Naive thymus-derived CD4-positive, alpha-beta T cell (primary cell): ENCODE measurements at regions of chr3 and their contacts with region 1.

Region 1: GRCh38 chr3:39406368-39407258 is at the start of gene RPSA:
- DNase-seq: peak; percentile 80 to 99 (median 98)
- ATAC-seq: peak; percentile 96
- H3K4me3 ChIP-seq: peak within 1 kb of the TSS; percentile 62
- H3K4me3 Mint-ChIP-seq: peak within 1 kb of the TSS; percentile 88 to 97 (median 94)
- H3K27ac ChIP-seq: peak within 1 kb of the TSS; percentile 86
- H3K27ac Mint-ChIP-seq: peak within 1 kb of the TSS; percentile 88 to 98 (median 96)
- H3K4me1 ChIP-seq: peaks cover 30 to 37% of the 10 kb centered on the region in 2 donors
- H3K4me1 Mint-ChIP-seq: peaks cover 28 to 55% (median 51%) of the 10 kb centered on the region in 7 donors
- H3K27me3 ChIP-seq: no peaks in the 10 kb centered on the region
- H3K27me3 Mint-ChIP-seq: peaks cover 0 to 2% (median 0%) of the 10 kb centered on the region in 5 donors
- total RNA-seq, gene RPSA: 1,411 to 1,898 (median 1,693) TPM

Region 2: DNA sequence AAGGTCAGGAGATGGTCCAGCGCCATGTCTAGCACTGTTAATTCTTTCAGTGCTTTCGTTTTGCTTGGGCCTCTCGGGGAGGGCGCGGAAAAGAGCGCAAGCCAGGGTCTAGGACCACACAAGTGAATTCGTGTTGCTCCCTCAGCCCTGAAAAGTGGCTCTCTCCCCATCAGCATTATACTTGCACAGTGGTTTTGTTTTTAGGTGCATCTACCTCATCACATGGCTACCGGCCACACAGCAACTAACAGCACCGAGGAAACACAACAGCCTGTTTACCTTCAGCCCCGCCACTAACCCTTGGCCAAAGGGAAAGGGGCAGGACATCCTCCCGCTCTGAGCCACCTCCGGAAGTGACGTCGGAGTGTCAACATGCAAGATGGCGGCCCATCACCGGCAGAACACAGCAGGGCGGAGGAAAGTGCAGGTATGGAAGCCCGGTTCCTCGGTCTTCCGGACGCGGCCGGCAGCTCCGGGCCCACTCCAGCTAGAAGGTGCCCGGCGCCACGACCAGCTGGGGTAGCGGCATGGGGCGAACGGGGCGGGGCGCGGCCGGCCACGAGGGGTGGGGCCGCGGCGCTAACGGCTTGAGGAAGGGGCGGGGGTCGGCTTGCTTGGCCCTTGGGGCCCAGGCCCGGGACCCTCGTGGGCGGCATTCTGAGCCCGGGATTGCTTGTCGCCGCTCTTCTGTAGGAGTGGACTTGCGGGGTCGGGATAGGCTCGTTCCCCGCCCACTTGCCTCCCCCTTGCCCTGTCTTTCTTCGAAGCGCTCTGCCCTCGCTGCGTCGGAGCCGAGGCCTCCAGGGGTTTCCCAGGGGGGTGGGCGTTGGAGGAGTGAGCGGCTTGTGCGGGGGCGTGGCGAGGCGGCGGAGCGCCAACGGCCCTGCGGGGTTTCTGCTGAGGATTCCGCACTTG is 354.7 kb before region 1 on chr3 and contains the starts of genes SCN11A and WDR48:
- CTCF ChIA-PET with region 1: no interaction called
- POLR2A ChIA-PET with region 1: interaction called, 3 read pairs
- intact Hi-C with region 1: loop called (anchors 1 kb)
- DNase-seq: peak; percentile 78 to 95 (median 90)
- ATAC-seq: peak; percentile 93
- H3K4me3 ChIP-seq: peak within 1 kb of the TSS; percentile 80
- H3K4me3 Mint-ChIP-seq: peak within 1 kb of the TSS; percentile 91 to 99 (median 99)
- H3K27ac ChIP-seq: peak within 1 kb of the TSS; percentile 98
- H3K27ac Mint-ChIP-seq: peak within 1 kb of the TSS; percentile 95 to 100 (median 99)
- H3K4me1 ChIP-seq: peaks cover 7 to 16% of the 10 kb centered on the region in 2 donors
- H3K4me1 Mint-ChIP-seq: peaks cover 32 to 81% (median 77%) of the 10 kb centered on the region in 7 donors
- H3K27me3 ChIP-seq: no peaks in the 10 kb centered on the region
- H3K27me3 Mint-ChIP-seq: no peaks in the 10 kb centered on the region
- total RNA-seq, gene SCN11A: 0.07 to 0.32 (median 0.19) TPM
- total RNA-seq, gene WDR48: 46.7 to 97.7 (median 68.0) TPM

Region 3: DNA sequence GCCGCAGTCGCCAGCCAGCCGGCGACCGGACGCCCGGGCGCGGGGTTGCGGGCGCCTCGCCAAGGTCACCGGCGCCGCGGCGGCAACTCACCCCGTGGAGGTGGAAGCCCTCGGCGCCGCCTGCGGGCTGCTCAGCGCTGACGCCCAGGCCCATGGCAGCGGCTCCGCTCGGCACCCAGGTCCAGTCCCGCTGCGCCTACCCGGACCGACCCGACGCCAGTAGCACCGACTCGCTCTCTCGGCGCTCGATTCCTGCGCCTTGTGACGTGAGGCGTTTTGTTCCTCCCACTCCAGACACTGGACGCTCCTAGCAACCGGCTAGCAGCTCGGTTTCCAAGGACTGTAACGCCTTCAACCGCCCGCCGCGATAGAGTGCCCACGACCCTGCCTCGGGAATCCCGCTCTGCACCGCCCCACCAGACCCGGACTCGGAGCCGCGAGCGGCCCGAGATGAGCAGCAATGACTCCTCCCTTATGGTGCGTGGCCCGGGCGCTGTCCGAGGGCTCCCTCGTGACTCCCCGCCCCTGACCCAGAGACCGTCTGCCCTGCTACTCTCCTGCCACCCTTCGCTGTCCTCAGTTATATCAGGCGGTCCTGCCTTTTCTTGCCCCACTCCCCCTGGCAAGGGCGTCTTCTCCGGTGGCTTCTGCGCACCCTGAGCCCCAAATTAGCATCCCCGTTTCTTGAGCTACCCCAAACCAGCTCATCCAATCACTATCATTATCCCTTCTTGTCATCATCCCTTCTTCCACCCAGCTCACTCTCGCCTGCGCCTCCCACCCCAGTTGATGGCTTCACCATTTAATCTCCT is 299.0 kb before region 1 on chr3 and contains the starts of genes GORASP1 and TTC21A:
- CTCF ChIA-PET with region 1: no interaction called
- POLR2A ChIA-PET with region 1: interaction called, 3 read pairs
- intact Hi-C with region 1: loop called (anchors 1 to 2 kb)
- DNase-seq: peak; percentile 33 to 79 (median 53)
- ATAC-seq: peak; percentile 74
- H3K4me3 ChIP-seq: peak within 1 kb of the TSS; percentile 95
- H3K4me3 Mint-ChIP-seq: peak within 1 kb of the TSS; percentile 88 to 100 (median 96)
- H3K27ac ChIP-seq: peak within 1 kb of the TSS; percentile 78
- H3K27ac Mint-ChIP-seq: peak within 1 kb of the TSS; percentile 84 to 96 (median 92)
- H3K4me1 ChIP-seq: peaks cover 18 to 22% of the 10 kb centered on the region in 2 donors
- H3K4me1 Mint-ChIP-seq: peaks cover 45 to 62% (median 52%) of the 10 kb centered on the region in 7 donors
- H3K27me3 ChIP-seq: no peaks in the 10 kb centered on the region
- H3K27me3 Mint-ChIP-seq: peaks cover 0 to 5% (median 0%) of the 10 kb centered on the region in 5 donors
- total RNA-seq, gene GORASP1: 28.2 to 58.5 (median 44.6) TPM
- total RNA-seq, gene TTC21A: 2.8 to 9.7 (median 5.3) TPM

Region 4: DNA sequence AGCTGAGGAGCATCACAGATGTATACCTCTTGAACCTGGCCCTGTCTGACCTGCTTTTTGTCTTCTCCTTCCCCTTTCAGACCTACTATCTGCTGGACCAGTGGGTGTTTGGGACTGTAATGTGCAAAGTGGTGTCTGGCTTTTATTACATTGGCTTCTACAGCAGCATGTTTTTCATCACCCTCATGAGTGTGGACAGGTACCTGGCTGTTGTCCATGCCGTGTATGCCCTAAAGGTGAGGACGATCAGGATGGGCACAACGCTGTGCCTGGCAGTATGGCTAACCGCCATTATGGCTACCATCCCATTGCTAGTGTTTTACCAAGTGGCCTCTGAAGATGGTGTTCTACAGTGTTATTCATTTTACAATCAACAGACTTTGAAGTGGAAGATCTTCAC is 74.1 kb before region 1 on chr3:
- CTCF ChIA-PET with region 1: no interaction called
- POLR2A ChIA-PET with region 1: no interaction called
- intact Hi-C with region 1: no loop called
- DNase-seq: no peak
- ATAC-seq: no peak
- H3K4me3 ChIP-seq: no peak overlapping the region
- H3K4me3 Mint-ChIP-seq: no peak overlapping the region
- H3K27ac ChIP-seq: no peak overlapping the region
- H3K27ac Mint-ChIP-seq: no peak overlapping the region
- H3K4me1 ChIP-seq: no peaks in the 10 kb centered on the region
- H3K4me1 Mint-ChIP-seq: peaks cover 0 to 40% (median 5%) of the 10 kb centered on the region in 7 donors
- H3K27me3 ChIP-seq: no peaks in the 10 kb centered on the region
- H3K27me3 Mint-ChIP-seq: no peaks in the 10 kb centered on the region

Region 5: DNA sequence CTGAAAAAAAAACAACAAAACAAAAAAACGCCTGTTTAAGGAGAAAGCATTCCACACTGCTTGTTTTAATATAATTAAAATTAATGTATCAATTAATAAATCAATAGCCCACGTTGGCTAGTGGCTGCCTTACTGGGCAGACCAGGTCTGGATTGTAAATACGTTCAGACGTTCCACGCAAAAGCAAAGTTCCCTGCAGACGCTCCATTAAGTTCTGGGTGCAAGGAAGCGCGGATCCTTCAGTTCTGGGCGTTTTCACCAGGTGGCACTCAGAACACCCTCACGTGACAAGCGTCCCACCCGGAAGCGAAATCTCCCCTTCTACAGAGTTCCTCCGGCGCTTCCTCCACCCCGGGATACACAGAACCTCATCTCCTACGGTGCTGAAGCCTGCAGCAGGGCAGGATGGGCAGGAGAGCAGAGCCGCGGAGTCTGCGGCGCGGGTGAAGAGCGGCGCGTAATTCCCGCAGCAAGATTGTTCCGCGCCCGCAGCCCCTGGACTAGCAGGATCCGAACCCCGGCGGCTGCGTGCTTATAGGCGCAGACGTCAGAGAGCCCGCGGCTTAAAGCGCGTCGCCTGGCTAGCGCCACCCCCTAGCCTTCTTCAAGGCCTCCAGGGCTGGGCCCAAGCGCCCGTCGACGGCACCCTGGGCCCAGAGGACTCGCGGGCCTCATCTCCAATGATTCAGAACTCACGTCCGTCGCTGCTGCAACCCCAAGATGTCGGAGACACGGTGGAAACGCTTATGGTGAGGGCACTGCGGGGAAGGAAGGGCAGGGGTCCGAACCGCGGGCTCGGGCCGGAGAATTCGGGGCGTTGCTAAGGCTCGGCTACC is 23.4 kb before region 1 on chr3 and contains the start of gene SLC25A38:
- CTCF ChIA-PET with region 1: interaction called, 5 read pairs
- POLR2A ChIA-PET with region 1: interaction called, 25 read pairs
- intact Hi-C with region 1: loop called (anchors 1 kb)
- DNase-seq: peak; percentile 60 to 86 (median 84)
- ATAC-seq: peak; percentile 86
- H3K4me3 ChIP-seq: peak within 1 kb of the TSS; percentile 88
- H3K4me3 Mint-ChIP-seq: peak within 1 kb of the TSS; percentile 91 to 99 (median 97)
- H3K27ac ChIP-seq: peak within 1 kb of the TSS; percentile 96
- H3K27ac Mint-ChIP-seq: peak within 1 kb of the TSS; percentile 95 to 100 (median 99)
- H3K4me1 ChIP-seq: peaks cover 26 to 39% of the 10 kb centered on the region in 2 donors
- H3K4me1 Mint-ChIP-seq: peaks cover 36 to 59% (median 49%) of the 10 kb centered on the region in 7 donors
- H3K27me3 ChIP-seq: no peaks in the 10 kb centered on the region
- H3K27me3 Mint-ChIP-seq: no peaks in the 10 kb centered on the region
- total RNA-seq, gene SLC25A38: 30.3 to 50.2 (median 46.8) TPM

Region 6: GRCh38 chr3:39577541-39577940 is 170.9 kb after region 1 on chr3:
- CTCF ChIA-PET with region 1: no interaction called
- POLR2A ChIA-PET with region 1: no interaction called
- intact Hi-C with region 1: no loop called
- DNase-seq: no peak
- ATAC-seq: no peak
- H3K4me3 ChIP-seq: no peak overlapping the region
- H3K4me3 Mint-ChIP-seq: no peak overlapping the region
- H3K27ac ChIP-seq: no peak overlapping the region
- H3K27ac Mint-ChIP-seq: no peak overlapping the region
- H3K4me1 ChIP-seq: no peaks in the 10 kb centered on the region
- H3K4me1 Mint-ChIP-seq: no peaks in the 10 kb centered on the region
- H3K27me3 ChIP-seq: no peaks in the 10 kb centered on the region
- H3K27me3 Mint-ChIP-seq: peaks cover 3 to 20% (median 8%) of the 10 kb centered on the region in 5 donors

Region 7: GRCh38 chr3:40179016-40179415 is 772.4 kb after region 1 on chr3:
- CTCF ChIA-PET with region 1: no interaction called
- POLR2A ChIA-PET with region 1: no interaction called
- intact Hi-C with region 1: loop called in 1 of 2 experiments (anchors 1 kb)
- DNase-seq: peak in 8 of 9 donors; percentile 19 to 45 (median 26)
- ATAC-seq: peak; percentile 47
- H3K4me3 ChIP-seq: no peak overlapping the region
- H3K4me3 Mint-ChIP-seq: no peak overlapping the region
- H3K27ac ChIP-seq: no peak overlapping the region
- H3K27ac Mint-ChIP-seq: no peak overlapping the region
- H3K4me1 ChIP-seq: no peaks in the 10 kb centered on the region
- H3K4me1 Mint-ChIP-seq: no peaks in the 10 kb centered on the region
- H3K27me3 ChIP-seq: no peaks in the 10 kb centered on the region
- H3K27me3 Mint-ChIP-seq: no peaks in the 10 kb centered on the region

Region 8: DNA sequence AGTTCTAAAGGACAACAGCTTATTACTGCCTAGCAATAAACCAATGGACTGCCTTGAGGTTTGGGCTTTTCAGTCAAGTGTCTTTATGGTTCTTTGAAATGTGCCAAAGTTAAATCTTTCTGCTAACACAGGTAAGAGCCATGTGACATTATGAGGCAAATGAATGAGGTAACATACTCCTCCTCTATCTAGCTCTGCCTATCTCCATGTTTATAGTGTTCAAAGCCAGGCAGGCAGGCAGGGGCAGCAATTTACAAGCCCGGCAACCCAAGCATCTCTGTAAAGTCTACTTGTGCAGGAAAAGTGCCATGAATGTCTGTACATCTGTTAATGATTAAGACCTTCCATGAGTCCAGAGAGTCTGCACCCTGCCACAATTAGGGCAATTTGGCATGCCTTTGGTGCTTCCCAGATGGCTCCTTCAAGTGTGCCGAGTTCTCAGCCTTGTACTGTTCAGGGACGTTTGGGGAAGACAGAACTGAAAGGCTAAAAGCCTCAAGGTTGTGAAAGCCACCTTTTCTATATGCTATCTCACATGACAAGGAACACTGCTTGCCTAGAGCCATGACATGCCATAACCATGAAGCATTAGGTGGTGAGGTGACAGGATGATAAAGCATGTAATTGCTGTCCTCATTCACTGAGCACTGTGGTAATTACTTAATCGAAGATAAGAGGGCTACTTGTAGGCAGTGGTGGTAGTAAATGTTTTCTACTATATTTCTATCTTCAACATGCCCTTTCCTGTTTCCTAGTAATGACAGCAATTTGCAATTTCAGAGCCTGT is 861.5 kb after region 1 on chr3:
- CTCF ChIA-PET with region 1: no interaction called
- POLR2A ChIA-PET with region 1: no interaction called
- intact Hi-C with region 1: no loop called
- DNase-seq: no peak
- ATAC-seq: peak; percentile 20
- H3K4me3 ChIP-seq: no peak overlapping the region
- H3K4me3 Mint-ChIP-seq: no peak overlapping the region
- H3K27ac ChIP-seq: no peak overlapping the region
- H3K27ac Mint-ChIP-seq: no peak overlapping the region
- H3K4me1 ChIP-seq: no peaks in the 10 kb centered on the region
- H3K4me1 Mint-ChIP-seq: peaks cover 0 to 6% (median 0%) of the 10 kb centered on the region in 7 donors
- H3K27me3 ChIP-seq: no peaks in the 10 kb centered on the region
- H3K27me3 Mint-ChIP-seq: peaks cover 0 to 5% (median 0%) of the 10 kb centered on the region in 5 donors

Region 9: GRCh38 chr3:41117398-41117870 is 1710.8 kb after region 1 on chr3:
- CTCF ChIA-PET with region 1: no interaction called
- POLR2A ChIA-PET with region 1: no interaction called
- intact Hi-C with region 1: loop called in 1 of 2 experiments (anchors 10 kb)
- DNase-seq: peak; percentile 67 to 93 (median 90)
- ATAC-seq: peak; percentile 92
- H3K4me3 ChIP-seq: peak overlapping the region; percentile 25
- H3K4me3 Mint-ChIP-seq: peak overlapping the region; percentile 43 to 90 (median 78)
- H3K27ac ChIP-seq: peak overlapping the region; percentile 68
- H3K27ac Mint-ChIP-seq: peak overlapping the region; percentile 67 to 98 (median 93)
- H3K4me1 ChIP-seq: peaks cover 12 to 27% of the 10 kb centered on the region in 2 donors
- H3K4me1 Mint-ChIP-seq: peaks cover 18 to 67% (median 46%) of the 10 kb centered on the region in 7 donors
- H3K27me3 ChIP-seq: no peaks in the 10 kb centered on the region
- H3K27me3 Mint-ChIP-seq: no peaks in the 10 kb centered on the region